ENCODE measurements at regions of chr4 and their contacts with region 1.

Region 1: GRCh38 chr4:7101692-7102515 is 34.0 kb upstream of the GRPEL1 start:
- DNase-seq: peak; percentile 79
- CTCF ChIP-seq: peak; percentile 63

Region 2: DNA sequence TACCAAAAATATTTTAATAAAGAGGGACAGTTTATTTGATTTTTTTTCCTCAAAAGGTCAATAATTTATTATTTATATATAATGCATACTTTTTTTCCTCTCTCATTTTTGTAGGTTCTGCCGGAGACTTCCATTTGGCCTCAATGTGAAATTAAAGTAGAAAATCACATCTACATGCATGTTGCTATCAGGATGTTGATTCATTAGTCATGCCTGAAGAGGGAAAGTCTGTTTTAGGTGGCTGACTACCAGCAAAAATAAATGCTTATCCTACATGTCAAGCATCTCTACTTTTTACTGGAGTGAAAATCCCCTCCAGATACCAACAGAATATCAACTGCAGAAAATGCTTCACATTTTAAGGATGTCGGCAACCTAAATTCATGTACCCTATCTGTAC is 277.8 kb before region 1 on chr4:
- CTCF ChIA-PET with region 1: no interaction called
- POLR2A ChIA-PET with region 1: no interaction called
- DNase-seq: no peak
- CTCF ChIP-seq: no peak

Region 3: GRCh38 chr4:6944301-6945051 is 157.4 kb before region 1 on chr4:
- CTCF ChIA-PET with region 1: no interaction called
- POLR2A ChIA-PET with region 1: no interaction called
- DNase-seq: no peak
- CTCF ChIP-seq: no peak

Region 4: GRCh38 chr4:7081891-7082471 is 19.9 kb before region 1 on chr4:
- CTCF ChIA-PET with region 1: interaction called, 13 read pairs
- POLR2A ChIA-PET with region 1: no interaction called
- DNase-seq: peak; percentile 66
- CTCF ChIP-seq: peak; percentile 55

Region 5: GRCh38 chr4:7089213-7089986 is 12.5 kb before region 1 on chr4:
- CTCF ChIA-PET with region 1: interaction called, 14 read pairs
- POLR2A ChIA-PET with region 1: no interaction called
- DNase-seq: no peak
- CTCF ChIP-seq: no peak

Region 6: DNA sequence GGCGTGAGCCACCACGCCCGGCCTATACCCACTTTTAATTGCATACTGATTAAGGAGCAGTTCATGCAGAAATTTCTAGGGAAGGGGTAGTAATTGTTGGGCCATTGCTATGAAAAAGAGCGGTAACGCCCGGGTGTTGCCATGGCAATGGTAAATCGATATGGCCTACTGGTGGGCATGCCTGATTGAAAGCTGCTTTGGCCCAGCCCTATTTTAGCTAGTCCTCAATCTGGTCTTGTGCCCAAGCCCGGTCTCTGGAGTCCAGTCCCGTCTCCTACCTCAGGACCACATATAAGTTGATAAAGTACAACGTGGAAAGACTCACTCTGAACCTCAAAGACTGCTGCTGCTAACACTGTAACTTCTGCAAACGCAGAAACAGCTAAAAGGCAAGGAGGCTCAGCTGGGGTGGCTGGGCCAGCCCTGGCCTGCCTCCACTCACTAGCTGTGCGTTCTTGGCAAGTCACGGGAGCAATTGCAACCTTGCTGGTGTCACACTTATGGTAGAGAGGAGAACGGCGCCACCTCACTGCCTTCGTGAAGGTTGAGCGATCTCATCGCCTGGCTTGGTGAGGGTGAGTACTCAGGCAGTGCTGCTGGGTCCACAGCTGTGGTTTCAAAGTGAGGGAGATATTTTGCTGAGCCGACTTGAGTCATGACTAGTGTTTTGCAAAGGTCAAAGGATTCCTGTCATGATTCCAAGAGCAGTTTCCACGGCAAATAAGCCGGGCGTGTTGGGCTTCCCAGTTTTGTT is 23.0 kb after region 1 on chr4:
- CTCF ChIA-PET with region 1: interaction called, 10 read pairs
- POLR2A ChIA-PET with region 1: no interaction called
- DNase-seq: no peak
- CTCF ChIP-seq: no peak